ENCODE measurements at regions of chr6 and their contacts with region 1.

Region 1: DNA sequence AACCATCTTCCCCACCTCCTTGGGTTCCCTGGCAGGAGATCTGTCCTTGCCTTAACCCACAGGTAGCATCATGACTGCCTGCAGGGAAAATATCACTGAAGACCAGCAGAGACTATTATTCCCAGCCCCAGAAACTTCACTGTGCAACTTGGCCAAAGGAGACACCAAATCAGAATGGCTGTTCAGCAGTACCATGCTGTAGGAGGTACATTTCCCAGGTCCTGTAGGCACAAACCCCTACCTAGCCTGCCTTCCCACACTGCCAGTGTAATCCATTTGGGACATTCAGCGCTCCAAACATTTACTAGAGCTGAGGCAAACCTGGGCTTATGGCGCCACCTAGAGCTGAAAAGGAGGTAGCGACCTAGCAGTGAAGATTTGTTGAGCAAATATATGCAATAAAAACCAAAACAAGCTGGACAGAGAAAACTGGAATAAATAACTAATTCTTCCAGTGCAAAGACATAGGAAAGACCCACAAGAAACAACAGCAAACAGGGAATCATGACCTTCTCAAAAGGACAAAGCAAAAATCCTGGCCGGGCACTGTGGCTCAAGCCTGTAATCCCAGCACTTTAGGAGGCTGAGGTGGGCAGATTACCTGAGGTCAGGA is 60.3 kb downstream of the VTA1 start:
- DNase-seq: peak; percentile 46
- ATAC-seq: peak; percentile 51
- H3K4me3 Mint-ChIP-seq: no peak overlapping the region
- H3K27ac Mint-ChIP-seq: no peak overlapping the region
- H3K4me1 Mint-ChIP-seq: no peaks in the 10 kb centered on the region
- H3K27me3 Mint-ChIP-seq: no peaks in the 10 kb centered on the region

Region 2: DNA sequence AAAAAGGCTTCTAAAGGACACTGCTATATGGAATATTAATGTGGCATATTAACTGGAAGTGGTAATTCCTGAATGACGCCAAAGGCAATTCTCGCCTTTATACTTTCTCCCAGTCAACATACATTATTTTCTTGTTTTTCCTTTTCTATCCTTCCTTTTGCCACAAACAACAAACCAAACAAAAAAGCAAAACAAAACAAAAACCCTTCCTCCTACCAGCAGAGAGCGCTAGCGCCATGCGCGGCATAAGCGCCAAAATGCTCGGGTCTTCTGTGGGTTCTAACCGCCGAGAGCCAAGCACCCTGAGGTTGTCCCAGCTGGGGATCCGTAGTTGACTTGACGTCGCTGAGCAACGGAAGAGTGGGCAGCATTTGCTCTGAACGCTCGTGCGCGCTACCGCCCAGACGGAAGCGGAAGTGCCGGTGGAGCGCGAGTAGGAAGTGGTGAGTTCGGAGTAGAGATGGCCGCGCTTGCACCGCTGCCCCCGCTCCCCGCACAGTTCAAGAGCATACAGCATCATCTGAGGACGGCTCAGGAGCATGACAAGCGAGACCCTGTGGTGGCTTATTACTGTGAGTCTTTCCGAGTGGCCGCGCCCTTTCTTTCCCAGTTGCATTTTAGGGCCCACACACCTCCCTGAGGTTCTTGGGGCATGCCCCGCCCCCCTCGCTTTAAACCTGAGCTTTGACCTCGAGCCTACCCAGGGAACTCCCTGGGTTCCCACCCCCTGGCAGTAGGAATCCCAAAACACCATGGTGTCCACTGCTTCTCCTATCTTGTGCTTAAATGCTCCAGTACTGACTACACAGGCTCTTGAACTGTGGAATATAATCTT is 60.3 kb before region 1 on chr6 and contains the starts of genes NMBR and VTA1:
- CTCF ChIA-PET with region 1: interaction called, 20 read pairs
- POLR2A ChIA-PET with region 1: no interaction called
- DNase-seq: peak; percentile 98
- ATAC-seq: peak; percentile 99
- H3K4me3 Mint-ChIP-seq: peak within 1 kb of the TSS; percentile 90
- H3K27ac Mint-ChIP-seq: peak within 1 kb of the TSS; percentile 89
- H3K4me1 Mint-ChIP-seq: peaks cover 42% of the 10 kb centered on the region
- H3K27me3 Mint-ChIP-seq: no peaks in the 10 kb centered on the region
- total RNA-seq, gene NMBR: not detected
- total RNA-seq, gene VTA1: 47.2 to 51.2 TPM

Region 3: DNA sequence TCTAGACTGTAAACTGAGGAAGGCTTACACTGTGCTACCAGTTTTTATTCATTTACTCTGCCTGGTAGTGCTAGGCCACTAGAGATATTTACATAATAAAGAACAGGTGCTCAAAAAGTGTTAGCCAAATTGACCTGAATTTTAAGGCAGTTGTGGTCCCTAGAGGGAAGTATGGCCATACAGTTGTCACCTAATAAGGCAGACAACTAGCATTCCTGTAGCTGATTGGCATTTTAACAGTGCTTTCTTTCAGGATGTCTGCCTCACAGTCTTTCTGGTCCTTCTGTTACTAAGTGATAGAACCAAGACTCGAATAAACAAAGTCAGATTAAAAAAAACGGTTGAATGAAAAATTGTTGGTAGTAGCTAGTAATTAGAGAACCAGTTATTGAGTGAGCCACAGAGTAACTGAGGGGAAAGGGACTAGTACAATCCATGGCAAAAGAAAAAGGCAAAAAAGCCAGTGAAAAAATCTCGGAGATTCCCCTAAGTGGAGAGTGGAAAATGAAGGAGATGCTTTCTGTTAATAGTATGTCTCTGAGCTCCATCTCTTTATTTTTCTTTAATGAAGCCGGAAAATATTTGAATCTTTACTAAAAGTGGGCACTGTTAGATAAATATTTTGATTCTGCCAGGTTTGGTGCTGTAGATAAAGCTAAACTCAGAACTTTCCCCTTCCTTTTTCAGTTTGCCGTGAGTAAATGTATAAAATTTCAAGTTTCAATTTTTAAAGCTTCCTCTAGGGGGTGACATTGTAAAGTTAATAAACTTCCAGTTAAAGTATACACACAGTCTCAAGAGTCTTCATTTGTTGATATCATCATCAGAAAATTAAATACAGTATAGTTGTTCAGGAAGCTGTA is 51.2 kb before region 1 on chr6:
- CTCF ChIA-PET with region 1: interaction called, 21 read pairs
- POLR2A ChIA-PET with region 1: no interaction called
- DNase-seq: no peak
- ATAC-seq: peak; percentile 63
- H3K4me3 Mint-ChIP-seq: no peak overlapping the region
- H3K27ac Mint-ChIP-seq: no peak overlapping the region
- H3K4me1 Mint-ChIP-seq: peaks cover 20% of the 10 kb centered on the region
- H3K27me3 Mint-ChIP-seq: no peaks in the 10 kb centered on the region

Region 4: GRCh38 chr6:142195862-142196541 is 11.4 kb before region 1 on chr6:
- CTCF ChIA-PET with region 1: interaction called, 16 read pairs
- POLR2A ChIA-PET with region 1: no interaction called
- DNase-seq: no peak
- ATAC-seq: no peak
- H3K4me3 Mint-ChIP-seq: no peak overlapping the region
- H3K27ac Mint-ChIP-seq: no peak overlapping the region
- H3K4me1 Mint-ChIP-seq: peaks cover 7% of the 10 kb centered on the region
- H3K27me3 Mint-ChIP-seq: no peaks in the 10 kb centered on the region

Region 5: GRCh38 chr6:142218446-142218845 is 11.1 kb after region 1 on chr6:
- CTCF ChIA-PET with region 1: interaction called, 17 read pairs
- POLR2A ChIA-PET with region 1: no interaction called
- DNase-seq: no peak
- ATAC-seq: no peak
- H3K4me3 Mint-ChIP-seq: no peak overlapping the region
- H3K27ac Mint-ChIP-seq: no peak overlapping the region
- H3K4me1 Mint-ChIP-seq: no peaks in the 10 kb centered on the region
- H3K27me3 Mint-ChIP-seq: no peaks in the 10 kb centered on the region

Region 6: GRCh38 chr6:142236691-142237090 is 29.3 kb after region 1 on chr6:
- CTCF ChIA-PET with region 1: interaction called, 11 read pairs
- POLR2A ChIA-PET with region 1: no interaction called
- DNase-seq: no peak
- ATAC-seq: no peak
- H3K4me3 Mint-ChIP-seq: no peak overlapping the region
- H3K27ac Mint-ChIP-seq: no peak overlapping the region
- H3K4me1 Mint-ChIP-seq: peaks cover 12% of the 10 kb centered on the region
- H3K27me3 Mint-ChIP-seq: peaks cover 2% of the 10 kb centered on the region